Sigmoid colon (tissue), 7 donors: ENCODE measurements at regions of chr19 and their contacts with region 1.

Region 1: DNA sequence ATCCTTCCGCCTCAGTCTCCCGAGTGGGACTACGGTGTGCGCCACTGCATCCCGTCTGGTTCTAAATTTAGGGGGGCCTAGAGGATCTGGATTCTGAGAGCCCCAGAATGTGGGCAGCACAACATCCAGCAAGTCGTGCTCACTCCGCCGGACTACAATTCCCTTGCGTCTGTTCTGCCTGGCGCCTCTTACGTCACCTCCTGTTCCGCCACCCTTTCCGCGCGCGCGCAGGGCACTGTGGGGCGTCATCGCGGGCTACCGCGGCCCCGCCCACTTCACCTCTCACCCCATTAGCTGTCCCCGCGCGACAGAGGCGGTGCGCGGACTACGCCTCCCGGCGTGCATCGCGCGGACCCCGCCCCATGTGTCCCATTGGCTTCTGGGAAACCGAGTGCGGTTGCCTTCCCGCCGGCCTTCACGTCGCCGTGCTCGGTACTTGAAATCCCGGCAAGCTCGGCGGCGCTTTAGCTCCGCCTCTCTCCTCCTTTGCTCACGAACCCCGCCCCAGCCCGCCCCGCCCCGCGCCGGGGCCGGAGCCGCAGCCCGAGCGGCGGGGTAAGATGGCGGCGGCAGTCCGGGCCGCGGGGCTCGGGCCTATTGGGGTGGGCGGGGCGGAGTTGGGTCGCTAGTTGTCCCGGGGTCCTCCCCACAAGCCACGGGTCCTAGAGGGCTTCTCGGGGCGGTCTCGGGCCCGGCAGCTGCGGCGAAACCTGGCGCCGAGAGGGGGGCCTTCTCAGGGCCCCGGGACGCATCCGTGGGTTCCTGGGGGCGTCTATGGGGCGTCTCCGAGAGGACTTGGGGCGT is at the start of gene SCAF1:
- DNase-seq: peak; percentile 100
- H3K4me3 ChIP-seq: peak within 1 kb of the TSS; percentile 83 to 95 (median 90)
- H3K27ac ChIP-seq: peak within 1 kb of the TSS; percentile 97 to 100 (median 99)
- H3K4me1 ChIP-seq: peaks cover 0 to 70% (median 60%) of the 10 kb centered on the region in 4 donors
- H3K27me3 ChIP-seq: no peaks in the 10 kb centered on the region
- CTCF ChIP-seq: no peak
- EP300 ChIP-seq: peak in 2 of 4 donors; percentile 17 to 90
- POLR2A ChIP-seq: peak; percentile 97 to 98
- total RNA-seq, gene SCAF1: 10.9 to 21.3 (median 12.5) TPM

Region 2: DNA sequence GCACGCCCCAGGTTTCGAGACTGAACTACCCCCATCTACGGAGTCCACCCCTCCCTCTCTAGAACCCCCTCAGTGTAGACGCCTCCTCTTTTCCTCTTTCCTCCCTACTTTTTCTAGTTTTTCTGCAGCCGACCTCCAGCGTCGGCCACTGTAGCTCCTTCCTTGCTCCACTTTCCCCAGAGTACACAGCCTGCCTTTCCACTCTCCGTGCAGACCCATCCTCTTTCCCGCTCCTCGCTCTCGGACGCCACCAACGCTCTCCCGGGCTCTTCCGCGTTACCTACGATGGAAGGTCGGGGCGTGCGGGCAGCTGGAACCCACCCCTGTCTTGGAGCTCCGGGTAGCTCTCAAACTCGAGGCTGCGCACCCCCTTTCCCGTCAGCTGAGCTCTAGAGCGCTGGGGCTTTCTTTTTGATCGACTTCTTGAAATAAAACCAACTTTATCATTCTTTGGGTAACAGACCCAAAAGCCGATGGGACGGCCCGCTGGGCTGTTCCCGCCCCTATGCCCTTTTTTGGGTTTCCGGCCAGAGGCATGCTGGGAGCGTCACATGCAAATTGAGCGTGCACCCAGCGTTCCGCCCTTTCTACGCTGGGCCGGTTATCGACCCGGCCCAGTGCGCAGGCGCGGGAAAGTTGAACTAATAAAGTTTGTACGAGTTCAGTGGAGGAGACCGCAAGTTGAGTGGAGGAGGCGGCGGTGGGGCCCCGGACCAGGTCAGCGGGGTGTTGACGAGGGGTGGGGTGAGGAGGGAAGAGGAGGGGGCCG is 23.6 kb after region 1 on chr19 and contains the starts of genes BCL2L12 and IRF3:
- intact Hi-C with region 1: loop called (anchors 2 kb)
- DNase-seq: peak; percentile 99
- H3K4me3 ChIP-seq: peak within 1 kb of the TSS; percentile 62 to 75 (median 66)
- H3K27ac ChIP-seq: peak within 1 kb of the TSS; percentile 87 to 95 (median 92)
- H3K4me1 ChIP-seq: peaks cover 0 to 33% (median 22%) of the 10 kb centered on the region in 4 donors
- H3K27me3 ChIP-seq: no peaks in the 10 kb centered on the region
- CTCF ChIP-seq: no peak
- EP300 ChIP-seq: peak in 1 of 4 donors; percentile 63
- POLR2A ChIP-seq: peak; percentile 67 to 70
- total RNA-seq, gene BCL2L12: 4.6 to 9.2 (median 6.5) TPM
- total RNA-seq, gene IRF3: 28.2 to 59.1 (median 32.6) TPM

Region 3: GRCh38 chr19:49676690-49677231 is 34.9 kb after region 1 on chr19:
- intact Hi-C with region 1: loop called (anchors 1 kb)
- DNase-seq: peak; percentile 100
- H3K4me3 ChIP-seq: peak overlapping the region; percentile 71 to 96 (median 94)
- H3K27ac ChIP-seq: peak overlapping the region; percentile 92 to 95 (median 94)
- H3K4me1 ChIP-seq: peaks cover 0 to 54% (median 51%) of the 10 kb centered on the region in 4 donors
- H3K27me3 ChIP-seq: no peaks in the 10 kb centered on the region
- CTCF ChIP-seq: no peak
- EP300 ChIP-seq: no peak
- POLR2A ChIP-seq: no peak